Left ventricle myocardium superior (tissue), 1 donor: ENCODE measurements at regions of chr2 and their contacts with region 1.

Region 1: DNA sequence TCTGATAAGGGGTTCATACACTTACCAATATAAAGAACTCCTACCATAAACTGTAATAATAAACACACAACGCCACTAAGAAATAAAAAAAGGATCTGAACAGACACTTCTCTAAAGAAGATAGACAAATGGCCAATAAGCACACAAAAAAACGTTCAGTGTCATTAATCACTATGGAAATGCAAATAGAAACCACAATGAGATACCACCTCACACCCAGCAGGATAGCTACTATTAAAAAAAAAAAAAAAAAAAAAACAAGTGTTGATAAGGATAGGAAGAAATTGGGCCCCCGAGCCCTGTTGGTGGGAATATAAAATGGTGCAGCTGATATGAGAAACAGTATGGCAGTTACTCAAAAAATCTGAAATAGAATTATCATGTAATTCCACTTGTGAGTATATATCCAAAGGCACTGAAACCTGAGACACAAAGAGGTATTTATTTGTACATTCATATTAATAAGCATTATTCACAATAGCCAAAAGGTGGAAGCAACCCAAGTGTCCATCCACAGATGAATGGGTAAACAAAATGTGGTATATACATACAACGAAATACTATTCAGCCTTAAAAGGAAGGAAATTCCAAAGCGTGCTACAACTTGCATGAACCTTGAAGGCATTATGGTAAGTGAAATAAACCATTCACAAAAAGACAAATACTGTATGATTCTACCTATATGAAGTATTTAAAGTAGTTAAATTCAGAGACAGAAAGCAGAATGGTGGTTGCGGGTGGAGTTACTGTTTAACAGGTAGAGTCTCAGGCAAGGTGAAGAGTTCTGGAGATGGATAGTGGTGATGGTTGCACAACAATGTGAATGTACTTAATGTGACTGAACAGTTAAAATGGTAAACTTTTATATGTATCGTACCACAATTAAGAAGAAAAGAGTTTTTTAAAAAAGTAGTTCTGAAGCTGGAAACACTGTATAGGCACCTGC is 17.9 kb downstream of the REV1 start:
- DNase-seq: no peak
- ATAC-seq: no peak

Region 2: GRCh38 chr2:99348173-99348572 is 123.8 kb before region 1 on chr2:
- intact Hi-C with region 1: loop called (anchors 10 kb)
- DNase-seq: no peak
- ATAC-seq: no peak